K562 (cell line): ENCODE measurements at regions of chr7 and their contacts with region 1.

Region 1: DNA sequence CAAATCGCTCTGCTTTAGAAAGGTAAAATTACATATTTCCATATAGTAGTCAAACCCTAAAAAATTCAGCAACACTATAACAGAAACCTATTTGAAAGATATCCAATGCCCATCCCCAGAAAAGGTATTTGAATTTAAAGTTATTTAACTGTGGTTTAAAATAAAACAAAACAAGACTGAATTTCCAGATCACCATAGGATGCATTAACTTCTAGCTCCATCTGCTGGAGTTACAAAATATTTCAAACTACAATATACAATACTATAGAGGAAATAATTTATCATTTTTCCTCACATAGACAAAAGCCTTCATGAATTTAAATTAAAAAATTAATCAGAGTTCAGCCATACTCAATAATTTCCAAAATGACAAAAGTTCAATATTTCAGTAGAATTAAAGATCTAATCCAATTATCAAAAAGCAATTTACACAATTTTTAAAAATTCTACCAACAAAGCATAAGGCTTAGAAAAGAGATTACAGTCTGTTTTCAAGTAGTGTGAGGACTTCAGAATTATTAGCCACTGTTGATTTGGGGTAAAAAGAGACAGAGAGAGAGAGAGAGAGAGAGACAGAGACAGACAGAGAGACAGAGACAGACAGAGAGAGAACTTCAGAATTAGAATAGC is 75.9 kb downstream of the LMBR1 start:
- DNase-seq: peak in 1 of 4 experiments; percentile 25
- ATAC-seq: peak; percentile 54; the same call in 2 of the 3 replicates
- H3K4me3 ChIP-seq: no peak overlapping the region
- H3K27ac ChIP-seq: no peak overlapping the region
- H3K4me1 ChIP-seq: peaks cover 4 to 11% of the 10 kb centered on the region in 2 experiments
- H3K27me3 ChIP-seq: no peaks in the 10 kb centered on the region
- CTCF ChIP-seq: peak in 2 of 3 experiments; percentile 30 to 77; a peak in 3 of 6 replicates
- EP300 ChIP-seq: no peak
- POLR2A ChIP-seq: no peak
- RAD21 ChIP-seq: peak; percentile 63 to 70

Region 2: GRCh38 chr7:155796381-155797261 is 1020.4 kb before region 1 on chr7:
- CTCF ChIA-PET with region 1: interaction called, 4 read pairs
- POLR2A ChIA-PET with region 1: no interaction called
- in situ Hi-C with region 1: no loop called
- intact Hi-C with region 1: loop called (anchors 2 kb)
- DNase-seq: peak; percentile 80 to 91 (median 91)
- ATAC-seq: peak; percentile 97
- H3K4me3 ChIP-seq: no peak overlapping the region
- H3K27ac ChIP-seq: no peak overlapping the region
- H3K4me1 ChIP-seq: peaks cover 0 to 16% of the 10 kb centered on the region in 2 experiments; a peak in 2 of 5 replicates
- H3K27me3 ChIP-seq: peaks cover 38 to 59% of the 10 kb centered on the region in 2 experiments
- CTCF ChIP-seq: peak; percentile 81 to 93 (median 83)
- EP300 ChIP-seq: no peak
- POLR2A ChIP-seq: no peak
- RAD21 ChIP-seq: peak; percentile 71 to 88

Region 3: GRCh38 chr7:155815332-155816191 is 1001.5 kb before region 1 on chr7:
- CTCF ChIA-PET with region 1: interaction called, 8 read pairs
- POLR2A ChIA-PET with region 1: no interaction called
- in situ Hi-C with region 1: loop called (anchors 10 kb)
- intact Hi-C with region 1: no loop called
- DNase-seq: peak; percentile 64 to 85 (median 81)
- ATAC-seq: peak; percentile 94
- H3K4me3 ChIP-seq: no peak overlapping the region
- H3K27ac ChIP-seq: no peak overlapping the region
- H3K4me1 ChIP-seq: peaks cover 0 to 13% of the 10 kb centered on the region in 2 experiments; a peak in 1 of 5 replicates
- H3K27me3 ChIP-seq: peaks cover 47 to 87% of the 10 kb centered on the region in 2 experiments
- CTCF ChIP-seq: peak; percentile 72 to 89 (median 81)
- EP300 ChIP-seq: no peak
- POLR2A ChIP-seq: no peak
- RAD21 ChIP-seq: peak; percentile 67 to 85

Region 4: DNA sequence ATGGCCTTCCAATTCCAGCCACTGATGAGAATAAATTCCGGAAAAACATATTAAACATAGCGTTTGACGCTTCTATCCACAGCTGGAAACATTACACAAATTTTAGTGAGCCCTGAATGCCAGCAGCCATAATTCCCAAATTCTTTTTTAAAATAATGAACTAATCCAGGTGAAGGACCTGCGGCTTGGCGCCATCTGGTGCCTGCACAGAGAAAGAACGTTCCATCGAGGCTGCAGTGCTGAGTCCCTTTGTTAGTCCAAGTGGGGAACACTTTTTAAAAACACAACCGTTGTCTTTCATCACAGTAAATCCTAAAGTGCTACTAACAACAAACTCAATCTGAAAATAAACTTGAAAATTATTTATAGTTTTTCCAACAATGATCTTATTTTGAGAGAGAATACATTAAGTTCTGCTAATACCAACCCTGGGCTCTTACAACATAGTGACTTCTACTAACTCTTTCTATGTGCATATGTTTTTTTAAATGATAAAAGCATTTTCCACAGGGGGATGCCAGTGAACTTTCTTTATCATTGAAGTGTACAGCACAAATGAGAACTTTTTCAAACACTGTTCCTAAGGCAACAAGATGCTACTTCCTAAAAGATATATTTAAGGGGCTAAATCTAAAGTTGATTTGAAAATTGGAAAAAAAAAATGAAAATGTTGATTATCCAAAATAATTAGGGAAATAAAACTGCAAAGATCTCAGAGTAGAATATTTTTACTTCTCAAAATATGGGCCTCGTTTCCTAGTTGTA is 343.4 kb before region 1 on chr7:
- CTCF ChIA-PET with region 1: interaction called, 3 read pairs
- POLR2A ChIA-PET with region 1: no interaction called
- in situ Hi-C with region 1: no loop called
- intact Hi-C with region 1: loop called (anchors 1 kb)
- DNase-seq: peak; percentile 57 to 67 (median 62)
- ATAC-seq: peak; percentile 81
- H3K4me3 ChIP-seq: no peak overlapping the region
- H3K27ac ChIP-seq: no peak overlapping the region
- H3K4me1 ChIP-seq: peaks cover 0 to 10% of the 10 kb centered on the region in 2 experiments; a peak in 2 of 5 replicates
- H3K27me3 ChIP-seq: peaks cover 28 to 49% of the 10 kb centered on the region in 2 experiments
- CTCF ChIP-seq: peak; percentile 81 to 86 (median 86)
- EP300 ChIP-seq: no peak
- POLR2A ChIP-seq: no peak
- RAD21 ChIP-seq: peak; percentile 59 to 86

Region 5: DNA sequence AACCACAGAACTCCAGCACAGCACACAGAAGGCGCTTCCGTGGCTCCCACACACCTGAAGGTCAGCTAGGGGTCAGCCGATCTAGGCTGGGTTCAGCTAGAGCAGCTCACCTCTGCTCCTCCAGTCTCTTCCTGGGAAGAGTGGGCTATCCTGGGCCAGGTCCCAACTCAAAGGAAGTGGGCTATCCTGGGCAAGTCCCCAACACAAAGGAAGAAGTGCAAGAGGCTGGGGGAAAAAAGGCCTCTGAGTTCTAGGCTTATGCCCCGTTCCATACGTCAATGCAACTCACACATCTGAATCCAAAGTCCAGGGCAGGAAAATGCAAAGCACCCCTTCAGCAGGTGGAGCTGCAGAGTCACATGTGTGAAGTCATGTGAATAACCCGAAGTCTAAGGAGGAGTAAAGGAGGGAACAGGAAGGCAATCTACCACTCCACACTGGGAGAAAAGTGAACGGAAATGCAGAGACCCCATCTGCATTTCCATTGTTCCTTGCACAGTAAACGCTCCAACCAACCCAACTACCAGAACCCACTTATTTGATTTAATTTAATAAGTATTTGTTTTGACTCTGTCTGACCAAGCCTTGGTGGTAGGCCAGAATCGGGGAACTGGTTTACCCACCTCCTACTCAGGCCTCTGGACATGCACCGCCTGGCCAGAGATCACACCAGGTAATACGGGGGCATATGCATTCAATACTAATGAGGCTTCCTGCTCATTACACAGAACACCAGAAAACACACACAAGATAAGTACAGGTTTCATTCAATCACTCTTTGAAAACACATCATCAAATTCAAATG is 271.9 kb before region 1 on chr7:
- CTCF ChIA-PET with region 1: no interaction called
- POLR2A ChIA-PET with region 1: no interaction called
- in situ Hi-C with region 1: no loop called
- intact Hi-C with region 1: loop called (anchors 10 kb)
- DNase-seq: peak in 1 of 4 experiments; percentile 27
- ATAC-seq: peak; percentile 61
- H3K4me3 ChIP-seq: no peak overlapping the region
- H3K27ac ChIP-seq: no peak overlapping the region
- H3K4me1 ChIP-seq: peaks cover 0 to 4% of the 10 kb centered on the region in 2 experiments; a peak in 4 of 5 replicates
- H3K27me3 ChIP-seq: peaks cover 44 to 64% of the 10 kb centered on the region in 2 experiments
- CTCF ChIP-seq: peak; percentile 7 to 44 (median 29); a peak in 4 of 6 replicates
- EP300 ChIP-seq: no peak
- POLR2A ChIP-seq: no peak
- RAD21 ChIP-seq: peak in 1 of 2 experiments; percentile 52; a peak in 2 of 4 replicates

Region 6: DNA sequence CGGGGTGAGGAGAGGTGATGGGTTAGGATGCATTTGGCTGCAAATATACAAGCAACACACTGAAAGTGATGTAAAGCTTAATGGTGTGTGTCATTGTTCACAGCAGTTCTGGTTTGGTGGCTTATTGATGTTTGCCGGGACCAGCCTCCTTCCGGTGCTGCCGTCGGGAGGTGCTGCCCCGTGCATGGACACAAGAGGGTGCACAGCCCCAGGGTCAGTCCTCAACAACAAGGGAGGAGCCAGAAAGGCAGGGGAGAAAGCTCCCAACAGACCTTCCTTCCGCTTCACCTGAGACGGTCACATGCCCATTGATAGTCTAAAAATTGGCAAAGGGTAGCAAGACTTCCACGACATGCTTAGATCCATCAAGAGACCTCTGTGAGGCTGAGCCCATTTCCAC is 167.0 kb before region 1 on chr7:
- CTCF ChIA-PET with region 1: interaction called, 14 read pairs
- POLR2A ChIA-PET with region 1: no interaction called
- in situ Hi-C with region 1: no loop called
- intact Hi-C with region 1: loop called (anchors 1 kb)
- DNase-seq: peak; percentile 73 to 79 (median 75)
- ATAC-seq: peak; percentile 98
- H3K4me3 ChIP-seq: no peak overlapping the region
- H3K27ac ChIP-seq: no peak overlapping the region
- H3K4me1 ChIP-seq: peaks cover 0 to 3% of the 10 kb centered on the region in 2 experiments; a peak in 1 of 5 replicates
- H3K27me3 ChIP-seq: no peaks in the 10 kb centered on the region
- CTCF ChIP-seq: peak; percentile 84 to 91 (median 88)
- EP300 ChIP-seq: no peak
- POLR2A ChIP-seq: no peak
- RAD21 ChIP-seq: peak in 1 of 2 experiments; percentile 74; a peak in 3 of 4 replicates